ENCODE measurements at regions of chr5 and their contacts with region 1.

Region 1: DNA sequence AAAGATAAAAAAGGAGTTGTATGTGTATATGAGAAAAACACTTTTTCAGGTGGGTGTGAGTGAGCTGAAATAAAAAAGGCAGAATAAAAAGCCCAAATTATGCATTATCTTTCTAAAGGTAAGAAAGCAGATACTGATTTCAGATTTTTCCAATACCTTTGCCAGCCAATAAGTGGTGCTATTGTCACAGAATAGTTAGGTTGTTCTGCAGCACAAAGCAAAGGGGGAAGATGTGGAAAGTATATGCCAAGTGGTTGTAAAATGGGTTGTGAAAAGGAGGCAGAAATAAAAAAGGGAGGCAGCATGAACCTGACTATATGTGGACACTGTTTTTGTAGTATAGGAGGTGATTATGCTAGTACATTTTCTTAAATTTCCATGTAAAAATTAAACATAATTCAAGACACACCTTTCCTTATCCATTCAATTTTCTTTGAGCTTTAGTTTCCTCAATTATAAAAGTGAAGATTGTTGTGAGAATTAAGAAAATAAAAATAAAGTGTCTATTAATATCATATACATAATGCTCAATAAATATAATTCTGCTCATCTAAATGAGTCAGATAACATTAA is 106.7 kb downstream of the SMIM15 start:
- DNase-seq: no peak
- H3K4me3 Mint-ChIP-seq: no peak overlapping the region
- H3K27ac Mint-ChIP-seq: no peak overlapping the region
- H3K4me1 Mint-ChIP-seq: no peaks in the 10 kb centered on the region
- H3K27me3 Mint-ChIP-seq: no peaks in the 10 kb centered on the region

Region 2: GRCh38 chr5:60959156-60959555 is 96.4 kb before region 1 on chr5:
- CTCF ChIA-PET with region 1: no interaction called
- intact Hi-C with region 1: loop called (anchors 5 kb)
- DNase-seq: no peak
- H3K4me3 Mint-ChIP-seq: no peak overlapping the region
- H3K27ac Mint-ChIP-seq: no peak overlapping the region
- H3K4me1 Mint-ChIP-seq: peaks cover 6% of the 10 kb centered on the region
- H3K27me3 Mint-ChIP-seq: no peaks in the 10 kb centered on the region

Region 3: DNA sequence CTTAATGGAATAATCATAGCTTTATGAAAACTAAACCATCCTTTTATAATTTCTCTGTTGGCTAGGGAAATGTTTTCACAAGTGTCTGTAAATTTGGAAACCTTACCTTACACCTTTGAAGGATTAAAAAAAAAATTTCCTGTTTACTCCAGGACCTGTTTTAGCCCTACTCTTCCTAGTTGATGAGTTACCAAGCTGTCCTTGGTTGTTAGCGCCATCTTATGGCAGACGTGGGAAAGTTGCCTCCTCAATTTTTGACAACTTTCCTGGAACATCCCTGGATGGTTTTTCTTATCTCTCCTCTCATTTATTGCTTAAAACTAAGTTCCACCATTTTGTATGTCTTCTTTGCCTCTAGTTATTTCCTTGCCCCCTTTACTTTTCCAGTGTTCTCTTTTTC is 302.2 kb after region 1 on chr5:
- CTCF ChIA-PET with region 1: no interaction called
- intact Hi-C with region 1: loop called (anchors 5 kb)
- DNase-seq: peak; percentile 42
- H3K4me3 Mint-ChIP-seq: no peak overlapping the region
- H3K27ac Mint-ChIP-seq: no peak overlapping the region
- H3K4me1 Mint-ChIP-seq: peaks cover 31% of the 10 kb centered on the region
- H3K27me3 Mint-ChIP-seq: no peaks in the 10 kb centered on the region

Region 4: DNA sequence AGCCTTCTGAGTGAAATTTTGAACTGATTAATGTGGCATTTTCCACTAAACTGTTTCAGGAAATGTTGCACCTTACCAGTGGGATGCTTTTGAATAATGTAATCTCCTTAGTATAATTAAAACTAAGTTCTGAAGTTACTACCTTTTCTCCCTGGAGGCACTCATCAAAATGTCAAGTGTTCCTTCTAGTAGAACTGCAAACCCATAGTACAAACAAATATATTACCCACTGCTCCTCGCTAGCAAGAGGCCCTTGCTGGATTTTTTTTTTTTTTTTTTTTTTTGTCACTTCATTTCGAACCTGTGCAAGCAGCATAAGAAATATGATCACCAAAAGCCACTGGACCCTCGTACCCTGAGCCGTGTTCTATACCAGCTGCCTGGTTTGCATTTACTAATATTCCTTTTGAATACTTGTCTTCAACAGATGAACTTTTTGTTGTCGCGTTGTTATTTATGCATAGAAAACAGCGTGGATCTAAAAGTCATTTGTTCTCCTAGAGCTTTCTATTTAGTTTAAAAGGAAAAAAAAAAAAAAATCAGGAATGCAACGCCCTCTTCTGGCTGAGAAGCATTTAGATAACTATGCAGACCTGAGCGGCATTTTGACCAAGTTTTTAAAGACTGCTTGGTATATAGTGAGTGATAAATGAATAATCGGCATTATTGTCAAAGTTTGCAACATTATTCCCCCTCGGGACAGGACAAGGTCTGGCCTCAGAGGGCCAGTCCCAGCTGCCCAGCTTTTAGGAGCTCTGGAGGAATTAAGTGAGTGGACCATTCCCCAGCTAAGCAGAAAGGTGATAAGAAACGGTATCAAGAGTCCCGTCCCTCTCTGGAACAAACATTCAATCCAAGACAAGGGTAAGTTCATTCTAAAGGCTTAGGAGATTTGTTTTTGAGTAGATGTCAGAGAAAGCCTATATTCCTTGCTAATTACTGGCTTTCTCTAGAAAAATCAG is 1088.0 kb after region 1 on chr5:
- CTCF ChIA-PET with region 1: no interaction called
- intact Hi-C with region 1: loop called (anchors 5 kb)
- DNase-seq: no peak
- H3K4me3 Mint-ChIP-seq: no peak overlapping the region
- H3K27ac Mint-ChIP-seq: no peak overlapping the region
- H3K4me1 Mint-ChIP-seq: no peaks in the 10 kb centered on the region
- H3K27me3 Mint-ChIP-seq: peaks cover 33% of the 10 kb centered on the region